ENCODE measurements at regions of chr22 and their contacts with region 1.

Region 1: DNA sequence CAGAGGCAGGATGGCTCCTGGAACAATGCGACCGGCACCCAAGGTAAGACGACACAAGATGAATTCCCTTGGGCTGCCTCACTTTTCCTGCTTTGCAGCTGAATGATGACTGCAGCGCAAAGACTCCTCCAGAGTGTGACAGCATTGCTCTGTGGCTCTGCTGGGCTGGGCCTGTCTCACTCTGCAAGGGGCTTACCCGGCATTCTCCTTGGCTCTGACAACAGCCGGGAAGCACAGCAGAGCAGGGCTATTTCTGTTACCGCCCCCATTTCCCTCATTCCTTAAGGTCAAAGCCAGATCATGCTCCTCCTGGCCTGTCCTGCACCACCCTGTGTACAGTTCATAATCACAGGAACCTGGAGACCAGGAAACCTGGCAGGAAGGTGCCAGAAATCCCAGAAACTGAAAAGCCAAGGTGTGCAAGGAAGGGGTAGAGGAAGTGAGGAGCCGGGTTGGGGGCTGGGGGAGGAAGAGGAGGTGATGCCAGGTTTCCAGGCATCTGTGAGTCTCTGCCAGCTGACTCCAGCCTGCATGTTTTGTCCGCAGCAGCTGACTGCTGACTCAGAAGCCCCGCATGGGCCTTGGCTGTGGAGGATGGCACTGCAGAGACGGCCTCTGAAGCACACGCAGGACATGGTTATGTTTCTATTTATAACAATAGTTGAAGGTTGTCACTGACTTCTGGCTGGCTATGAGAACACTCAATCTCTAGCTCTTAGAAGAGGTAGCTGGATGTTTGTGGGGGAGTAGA is 113.6 kb downstream of the MICAL3 start:
- DNase-seq: peak; percentile 91
- ATAC-seq: peak; percentile 99
- H3K4me3 ChIP-seq: no peak overlapping the region
- H3K27ac ChIP-seq: peak overlapping the region; percentile 64
- H3K4me1 ChIP-seq: peaks cover 17% of the 10 kb centered on the region
- H3K27me3 ChIP-seq: no peaks in the 10 kb centered on the region
- CTCF ChIP-seq: peak; percentile 74
- POLR2A ChIP-seq: peak; percentile 58; the same call in 1 of the 2 replicates
- RAD21 ChIP-seq: peak; percentile 87

Region 2: GRCh38 chr22:17972385-17973181 is 61.8 kb after region 1 on chr22:
- CTCF ChIA-PET with region 1: no interaction called
- POLR2A ChIA-PET with region 1: no interaction called
- dilution Hi-C with region 1: no loop called
- in situ Hi-C with region 1: loop called (anchors 5 kb)
- intact Hi-C with region 1: no loop called
- DNase-seq: peak; percentile 85
- ATAC-seq: peak; percentile 51
- H3K4me3 ChIP-seq: no peak overlapping the region
- H3K27ac ChIP-seq: peak overlapping the region; percentile 88
- H3K4me1 ChIP-seq: peaks cover 41% of the 10 kb centered on the region
- H3K27me3 ChIP-seq: no peaks in the 10 kb centered on the region
- CTCF ChIP-seq: no peak
- POLR2A ChIP-seq: no peak
- RAD21 ChIP-seq: no peak

Region 3: DNA sequence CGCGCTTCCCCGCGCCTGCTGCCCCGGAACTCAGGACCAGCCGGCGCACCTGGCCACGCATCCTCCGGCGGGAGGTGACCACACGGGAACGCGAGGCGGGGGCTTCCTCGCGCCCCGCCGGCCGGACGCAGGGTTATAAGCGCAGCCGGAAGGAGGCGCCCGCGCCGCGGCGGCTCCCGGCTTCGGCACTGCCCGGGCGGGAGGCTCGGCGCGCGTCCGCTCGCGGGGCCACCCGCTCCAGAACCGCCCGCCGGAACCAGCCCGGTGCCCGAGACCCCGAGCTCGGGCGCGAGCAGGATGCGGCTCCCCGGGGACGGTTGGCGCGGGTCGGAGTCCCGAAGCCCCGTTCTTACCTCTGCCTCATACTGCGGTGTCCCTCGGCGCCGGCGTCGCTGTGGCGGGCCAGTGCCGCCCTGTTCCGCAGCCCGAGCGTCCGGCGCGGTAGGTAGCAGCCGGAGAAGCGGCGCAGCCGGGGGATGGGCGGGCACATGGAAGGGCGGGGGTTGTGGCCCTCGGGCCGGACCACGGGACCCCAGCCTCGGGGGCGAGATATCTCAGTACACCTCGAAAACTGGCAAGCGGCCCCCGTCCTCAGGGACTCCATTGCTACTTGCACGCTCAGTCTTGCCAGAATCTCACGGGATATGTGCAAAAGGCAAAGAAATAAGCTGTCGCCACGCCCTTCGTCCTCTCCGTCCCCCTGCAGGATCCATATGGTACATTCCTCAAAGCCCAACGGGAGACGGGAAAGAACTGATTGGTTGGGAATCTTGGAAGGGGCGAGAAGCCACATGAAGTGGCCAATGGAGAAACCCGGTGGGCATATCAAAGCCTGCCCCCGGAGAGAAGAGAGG is 90.5 kb after region 1 on chr22:
- CTCF ChIA-PET with region 1: interaction called, 5 read pairs
- POLR2A ChIA-PET with region 1: no interaction called
- dilution Hi-C with region 1: no loop called
- in situ Hi-C with region 1: no loop called
- intact Hi-C with region 1: loop called (anchors 2 kb)
- DNase-seq: peak; percentile 99
- ATAC-seq: peak; percentile 96
- H3K4me3 ChIP-seq: peak overlapping the region; percentile 86
- H3K27ac ChIP-seq: peak overlapping the region; percentile 97
- H3K4me1 ChIP-seq: peaks cover 9% of the 10 kb centered on the region
- H3K27me3 ChIP-seq: no peaks in the 10 kb centered on the region
- CTCF ChIP-seq: peak; percentile 73
- POLR2A ChIP-seq: peak; percentile 81
- RAD21 ChIP-seq: peak; percentile 72

Region 4: DNA sequence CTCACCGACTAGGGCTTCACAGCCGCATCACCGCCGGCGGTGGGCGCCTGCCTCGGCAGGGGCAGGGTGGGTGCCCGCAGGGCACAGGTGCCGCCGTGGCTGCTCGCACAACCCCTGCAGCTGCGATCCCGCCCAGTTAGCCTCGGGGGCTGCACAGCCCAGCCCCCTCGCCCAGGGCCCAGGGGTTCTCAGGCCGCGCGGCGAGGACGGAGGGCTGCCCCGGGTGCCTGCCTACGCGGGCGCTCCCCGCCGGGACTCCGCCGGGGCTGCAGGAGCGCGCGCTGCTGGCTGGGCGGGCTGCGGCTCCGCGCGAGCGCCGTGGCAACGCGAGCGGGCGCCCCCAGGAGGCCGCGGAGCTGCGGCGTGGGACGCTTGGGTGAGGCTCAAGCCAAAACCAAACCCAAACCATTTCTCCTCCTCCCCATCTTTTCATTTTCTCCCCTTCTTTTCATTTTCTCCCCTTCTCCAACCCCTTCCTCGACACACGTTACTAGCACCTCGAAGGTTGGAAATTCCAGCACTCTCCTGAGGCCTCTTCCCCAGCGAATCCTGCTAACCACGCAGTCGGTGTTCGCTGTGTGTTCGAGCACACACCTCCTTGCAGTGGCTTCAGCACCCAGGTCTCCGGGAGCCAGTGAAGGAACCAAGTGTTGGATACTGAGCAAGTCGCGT is 113.7 kb after region 1 on chr22 and contains the start of gene MICAL3:
- CTCF ChIA-PET with region 1: interaction called, 8 read pairs
- POLR2A ChIA-PET with region 1: no interaction called
- dilution Hi-C with region 1: no loop called
- in situ Hi-C with region 1: no loop called
- intact Hi-C with region 1: loop called (anchors 1 kb)
- DNase-seq: peak; percentile 64
- ATAC-seq: peak; percentile 91
- H3K4me3 ChIP-seq: peak within 1 kb of the TSS; percentile 52
- H3K27ac ChIP-seq: peak within 1 kb of the TSS; percentile 21; the same call in 1 of the 2 replicates
- H3K4me1 ChIP-seq: peaks cover 2% of the 10 kb centered on the region; the same call in 1 of the 2 replicates
- H3K27me3 ChIP-seq: no peaks in the 10 kb centered on the region
- CTCF ChIP-seq: peak; percentile 78
- POLR2A ChIP-seq: no peak
- RAD21 ChIP-seq: peak; percentile 63
- total RNA-seq, gene MICAL3: 16.1 and 17.6 TPM in 2 replicates